Caco-2 (cell line): ENCODE measurements at regions of chr6 and their contacts with region 1.

Region 1: GRCh38 chr6:30742316-30743098 is at the start of gene FLOT1:
- DNase-seq: peak; percentile 96 to 97
- H3K4me3 ChIP-seq: peak within 1 kb of the TSS; percentile 48
- H3K4me3 Mint-ChIP-seq: peak within 1 kb of the TSS; percentile 90
- H3K27ac Mint-ChIP-seq: peak within 1 kb of the TSS; percentile 82
- H3K4me1 ChIP-seq: peaks cover 19% of the 10 kb centered on the region
- H3K4me1 Mint-ChIP-seq: peaks cover 25% of the 10 kb centered on the region
- H3K27me3 ChIP-seq: no peaks in the 10 kb centered on the region
- H3K27me3 Mint-ChIP-seq: no peaks in the 10 kb centered on the region
- CTCF ChIP-seq: no peak
- total RNA-seq, gene FLOT1: 101 and 113 TPM in 2 replicates

Region 2: DNA sequence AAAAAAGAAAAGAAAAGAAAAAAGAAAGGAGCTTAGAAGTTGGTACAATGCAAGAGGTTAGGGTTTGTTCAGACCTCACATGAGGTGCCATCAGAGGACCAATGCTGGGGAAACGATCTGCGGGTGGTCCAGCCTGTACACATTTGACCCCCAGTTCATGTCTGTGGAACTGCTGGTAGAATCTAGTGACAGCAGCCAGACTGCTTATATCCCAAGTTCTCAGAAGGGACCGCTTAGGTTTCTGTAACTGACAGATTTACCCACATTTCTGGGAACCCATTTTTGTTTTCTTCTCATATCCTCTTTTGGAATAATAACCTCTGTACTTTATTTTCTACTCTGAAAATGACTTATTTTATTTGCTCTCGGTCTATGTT is 60.8 kb before region 1 on chr6:
- CTCF ChIA-PET with region 1: no interaction called
- POLR2A ChIA-PET with region 1: no interaction called
- intact Hi-C with region 1: no loop called
- DNase-seq: no peak
- H3K4me3 ChIP-seq: no peak overlapping the region
- H3K4me3 Mint-ChIP-seq: no peak overlapping the region
- H3K27ac Mint-ChIP-seq: no peak overlapping the region
- H3K4me1 ChIP-seq: 0 out of 2 replicates have a peak, but pooled peaks cover 4% of the 10 kb centered on the region
- H3K4me1 Mint-ChIP-seq: peaks cover 13% of the 10 kb centered on the region
- H3K27me3 ChIP-seq: no peaks in the 10 kb centered on the region
- H3K27me3 Mint-ChIP-seq: no peaks in the 10 kb centered on the region
- CTCF ChIP-seq: no peak

Region 3: DNA sequence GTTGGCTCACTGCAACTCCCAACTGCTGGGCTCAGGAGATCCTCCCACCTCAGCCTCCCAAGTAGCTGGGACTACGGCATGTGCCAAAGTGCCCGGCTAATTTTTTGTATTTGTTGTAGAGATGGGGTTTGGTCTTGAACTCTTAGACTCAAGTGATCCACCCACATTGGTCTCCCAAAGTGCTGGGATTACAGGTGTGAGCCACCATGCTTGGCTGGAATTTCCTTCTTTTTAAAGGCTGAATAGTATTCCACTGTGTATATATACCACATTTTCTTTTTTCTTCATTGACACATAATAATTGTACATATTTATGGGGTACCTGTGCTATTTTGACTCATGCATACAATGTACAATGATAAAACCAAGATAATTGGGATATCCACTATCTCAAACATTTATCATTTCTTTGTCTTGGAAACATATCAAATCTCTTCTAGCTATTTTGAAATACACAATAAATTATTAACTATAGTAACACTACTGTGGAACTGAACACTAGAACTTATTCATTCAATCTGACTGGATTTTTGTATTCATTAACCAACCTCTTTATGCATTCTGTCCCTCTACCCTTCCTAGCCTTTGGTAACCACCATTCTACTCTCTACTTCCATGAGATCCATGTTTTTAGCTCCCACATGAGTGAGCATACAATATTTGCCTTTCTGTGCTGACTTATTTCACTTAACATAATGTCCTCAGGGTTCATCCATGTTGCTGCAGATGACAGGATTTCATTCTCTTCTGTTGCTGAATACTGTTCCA is 33.2 kb before region 1 on chr6:
- CTCF ChIA-PET with region 1: no interaction called
- POLR2A ChIA-PET with region 1: no interaction called
- intact Hi-C with region 1: no loop called
- DNase-seq: no peak
- H3K4me3 ChIP-seq: no peak overlapping the region
- H3K4me3 Mint-ChIP-seq: no peak overlapping the region
- H3K27ac Mint-ChIP-seq: no peak overlapping the region
- H3K4me1 ChIP-seq: no peaks in the 10 kb centered on the region
- H3K4me1 Mint-ChIP-seq: peaks cover 7% of the 10 kb centered on the region
- H3K27me3 ChIP-seq: no peaks in the 10 kb centered on the region
- H3K27me3 Mint-ChIP-seq: no peaks in the 10 kb centered on the region
- CTCF ChIP-seq: no peak

Region 4: DNA sequence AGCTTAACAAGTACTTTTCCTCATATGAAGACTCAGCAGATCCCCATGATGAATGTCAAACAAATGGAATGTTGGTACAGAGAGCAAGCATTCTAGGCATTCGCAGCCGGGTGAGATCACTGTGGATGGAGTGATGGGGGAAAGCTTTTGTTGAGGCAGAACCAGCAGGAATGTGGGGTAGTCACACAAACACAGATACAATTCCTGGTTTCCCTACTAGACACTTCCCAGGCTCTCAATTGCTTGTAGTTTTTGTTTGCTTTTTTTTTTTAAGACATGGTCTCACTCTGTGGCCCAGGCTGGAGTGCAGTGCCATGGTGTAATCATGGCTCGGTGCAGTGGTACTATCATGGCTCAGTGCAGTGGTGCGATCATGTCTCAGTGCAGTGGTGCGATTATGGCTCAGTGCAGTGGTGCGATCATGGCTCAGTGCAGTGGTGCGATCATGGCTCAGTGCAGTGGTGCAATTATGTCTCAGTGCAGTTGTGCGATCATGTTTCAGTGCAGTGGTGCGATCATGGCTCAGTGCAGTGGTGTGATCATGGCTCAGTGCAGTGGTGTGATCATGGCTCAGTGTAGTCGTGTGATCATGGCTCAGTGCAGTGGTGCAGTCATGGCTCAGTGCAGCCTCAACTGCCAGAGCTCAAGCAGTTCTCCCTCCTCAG is 17.2 kb after region 1 on chr6:
- CTCF ChIA-PET with region 1: interaction called, 5 read pairs
- POLR2A ChIA-PET with region 1: interaction called, 3 read pairs
- intact Hi-C with region 1: loop called (anchors 1 kb)
- DNase-seq: peak; percentile 65 to 66
- H3K4me3 ChIP-seq: no peak overlapping the region
- H3K4me3 Mint-ChIP-seq: no peak overlapping the region
- H3K27ac Mint-ChIP-seq: peak overlapping the region; percentile 75
- H3K4me1 ChIP-seq: peaks cover 39% of the 10 kb centered on the region
- H3K4me1 Mint-ChIP-seq: peaks cover 34% of the 10 kb centered on the region
- H3K27me3 ChIP-seq: no peaks in the 10 kb centered on the region
- H3K27me3 Mint-ChIP-seq: no peaks in the 10 kb centered on the region
- CTCF ChIP-seq: no peak

Region 5: DNA sequence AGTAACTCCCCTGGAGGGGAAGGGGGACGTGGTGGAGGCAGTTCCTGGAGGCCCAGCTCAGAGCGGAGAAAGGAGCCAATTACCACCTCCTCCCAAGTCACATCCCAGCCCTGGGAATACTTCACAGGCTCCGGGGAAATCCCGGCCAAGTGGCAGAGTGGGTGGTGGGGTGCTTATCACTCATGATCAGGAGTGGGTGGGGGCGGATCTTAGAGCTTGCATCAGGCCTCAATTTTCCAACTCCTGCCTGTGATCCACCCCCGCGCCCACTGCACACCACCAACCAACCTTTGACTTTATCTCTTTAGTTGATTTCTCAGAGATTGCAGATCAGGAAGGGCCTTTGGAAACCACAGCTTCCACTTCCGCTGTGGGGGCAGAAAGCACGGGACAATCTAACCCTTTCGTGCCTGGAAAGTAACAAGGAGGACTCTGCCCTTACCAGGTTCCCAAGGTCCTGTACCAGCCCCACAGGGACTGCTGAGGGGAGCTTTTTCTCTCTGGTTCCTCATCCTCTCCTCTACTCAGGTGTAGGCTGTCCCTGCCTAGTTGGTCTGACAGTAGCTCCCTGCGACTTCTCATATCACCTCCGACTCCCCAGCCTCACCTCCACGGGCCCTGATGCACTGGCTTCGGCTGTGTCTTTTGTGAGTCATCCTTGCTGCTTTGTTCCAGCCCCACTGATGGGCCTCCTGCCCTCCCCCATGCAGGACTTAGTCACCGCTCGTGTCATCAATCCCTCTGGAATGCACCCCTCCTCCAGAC is 26.8 kb after region 1 on chr6:
- CTCF ChIA-PET with region 1: interaction called, 5 read pairs
- POLR2A ChIA-PET with region 1: interaction called, 5 read pairs
- intact Hi-C with region 1: loop called (anchors 1 kb)
- DNase-seq: peak; percentile 87 to 92
- H3K4me3 ChIP-seq: peak overlapping the region; percentile 25
- H3K4me3 Mint-ChIP-seq: peak overlapping the region; percentile 95
- H3K27ac Mint-ChIP-seq: peak overlapping the region; percentile 100
- H3K4me1 ChIP-seq: peaks cover 47% of the 10 kb centered on the region
- H3K4me1 Mint-ChIP-seq: peaks cover 35% of the 10 kb centered on the region
- H3K27me3 ChIP-seq: no peaks in the 10 kb centered on the region
- H3K27me3 Mint-ChIP-seq: no peaks in the 10 kb centered on the region
- CTCF ChIP-seq: no peak

Region 6: DNA sequence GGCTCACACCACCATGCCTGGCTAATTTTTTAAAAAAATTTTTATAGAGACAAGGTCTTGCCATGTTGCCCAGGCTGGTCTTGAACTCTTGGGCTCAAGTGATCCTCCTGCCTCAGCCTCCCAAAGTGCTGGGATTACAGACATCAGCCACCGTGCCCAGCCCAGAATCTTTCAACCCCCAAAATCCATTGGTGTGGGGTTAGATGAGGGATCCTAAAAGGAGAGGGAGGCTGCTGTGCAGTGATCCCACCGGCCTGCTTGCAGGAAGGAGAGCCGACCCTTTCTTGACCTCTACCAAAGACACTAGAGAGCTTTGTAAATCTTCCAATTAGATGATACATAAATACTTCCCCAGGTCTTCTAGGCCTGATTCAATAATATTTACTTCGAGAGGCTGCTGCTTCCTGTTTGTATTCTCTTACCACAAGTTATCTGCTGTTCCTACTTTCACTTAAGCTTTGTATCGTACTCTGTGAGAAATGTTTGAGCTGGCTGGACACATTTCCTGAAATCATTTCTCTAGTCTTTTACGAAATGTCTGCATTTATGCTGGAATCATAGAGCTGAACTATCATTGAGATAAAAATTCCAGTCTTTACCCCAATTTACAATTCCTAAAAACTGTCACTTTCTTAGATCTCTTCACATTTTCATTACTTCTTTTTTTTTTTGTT is 51.2 kb after region 1 on chr6:
- CTCF ChIA-PET with region 1: interaction called, 3 read pairs
- POLR2A ChIA-PET with region 1: interaction called, 3 read pairs
- intact Hi-C with region 1: loop called (anchors 5 kb)
- DNase-seq: no peak
- H3K4me3 ChIP-seq: no peak overlapping the region
- H3K4me3 Mint-ChIP-seq: no peak overlapping the region
- H3K27ac Mint-ChIP-seq: no peak overlapping the region
- H3K4me1 ChIP-seq: no peaks in the 10 kb centered on the region; the same call in 1 of the 2 replicates
- H3K4me1 Mint-ChIP-seq: peaks cover 6% of the 10 kb centered on the region
- H3K27me3 ChIP-seq: no peaks in the 10 kb centered on the region
- H3K27me3 Mint-ChIP-seq: no peaks in the 10 kb centered on the region
- CTCF ChIP-seq: no peak

Region 7: DNA sequence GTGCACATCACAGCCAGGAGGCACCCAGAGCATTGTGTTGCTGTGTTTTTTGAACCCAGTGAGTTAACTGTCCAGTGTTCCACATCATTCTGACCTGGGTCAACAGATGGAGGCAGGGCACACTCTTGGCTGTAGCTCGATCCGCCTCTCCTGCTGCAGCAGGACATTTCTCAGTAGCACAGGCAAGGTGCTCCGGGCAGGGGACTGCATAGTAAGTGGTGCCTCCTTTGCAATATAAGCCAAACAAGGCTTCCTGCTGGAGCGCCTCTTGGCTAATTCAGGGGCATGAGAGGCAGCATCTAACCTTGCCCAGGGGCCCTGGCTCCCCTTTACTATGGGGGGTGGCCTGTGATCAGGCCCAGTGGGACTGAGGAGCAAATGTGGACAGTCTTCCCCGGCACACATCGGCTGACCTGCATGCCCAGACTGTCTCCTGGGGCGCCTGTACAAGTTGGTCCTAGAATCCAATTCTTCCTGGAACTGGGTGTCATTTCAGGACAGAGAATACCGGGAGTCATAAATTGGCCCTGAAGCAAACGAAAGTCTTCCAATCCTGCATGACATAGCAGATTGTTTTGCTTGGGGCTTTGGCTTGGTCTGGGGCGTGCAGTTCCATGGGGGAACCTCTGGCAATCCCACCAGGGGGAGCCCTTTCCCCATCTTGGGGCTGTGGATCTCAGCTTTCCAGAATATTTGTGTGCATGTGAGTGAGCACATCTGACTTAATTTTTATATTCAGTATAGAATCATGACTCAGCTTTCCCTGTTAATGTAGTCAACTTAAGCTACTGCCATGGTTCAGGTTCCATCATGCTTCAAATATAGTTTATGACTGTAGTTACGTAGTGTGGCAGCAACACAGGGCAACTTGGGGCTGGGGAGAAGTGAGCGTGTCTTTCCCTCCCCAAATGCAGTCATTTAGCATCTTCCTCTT is 85.8 kb after region 1 on chr6:
- CTCF ChIA-PET with region 1: interaction called, 3 read pairs
- POLR2A ChIA-PET with region 1: no interaction called
- intact Hi-C with region 1: loop called (anchors 2 kb)
- DNase-seq: peak; percentile 83 to 91
- H3K4me3 ChIP-seq: no peak overlapping the region
- H3K4me3 Mint-ChIP-seq: no peak overlapping the region
- H3K27ac Mint-ChIP-seq: peak overlapping the region; percentile 43
- H3K4me1 ChIP-seq: peaks cover 16% of the 10 kb centered on the region
- H3K4me1 Mint-ChIP-seq: peaks cover 27% of the 10 kb centered on the region
- H3K27me3 ChIP-seq: no peaks in the 10 kb centered on the region
- H3K27me3 Mint-ChIP-seq: no peaks in the 10 kb centered on the region
- CTCF ChIP-seq: peak; percentile 85 to 89

Region 8: GRCh38 chr6:30844091-30844535 is 101.6 kb after region 1 on chr6:
- CTCF ChIA-PET with region 1: interaction called, 5 read pairs
- POLR2A ChIA-PET with region 1: interaction called, 14 read pairs
- intact Hi-C with region 1: no loop called
- DNase-seq: peak; percentile 69 to 81
- H3K4me3 ChIP-seq: no peak overlapping the region
- H3K4me3 Mint-ChIP-seq: peak overlapping the region; percentile 13
- H3K27ac Mint-ChIP-seq: peak overlapping the region; percentile 79
- H3K4me1 ChIP-seq: peaks cover 49% of the 10 kb centered on the region
- H3K4me1 Mint-ChIP-seq: peaks cover 36% of the 10 kb centered on the region
- H3K27me3 ChIP-seq: no peaks in the 10 kb centered on the region
- H3K27me3 Mint-ChIP-seq: no peaks in the 10 kb centered on the region
- CTCF ChIP-seq: peak in 1 of 2 experiments; percentile 28

Region 9: GRCh38 chr6:30877419-30878371 is 135.2 kb after region 1 on chr6:
- CTCF ChIA-PET with region 1: interaction called, 5 read pairs
- POLR2A ChIA-PET with region 1: no interaction called
- intact Hi-C with region 1: loop called (anchors 1 kb)
- DNase-seq: peak; percentile 86
- H3K4me3 ChIP-seq: peak overlapping the region; percentile 10; the same call in 1 of the 2 replicates
- H3K4me3 Mint-ChIP-seq: peak overlapping the region; percentile 30
- H3K27ac Mint-ChIP-seq: no peak overlapping the region
- H3K4me1 ChIP-seq: peaks cover 12% of the 10 kb centered on the region
- H3K4me1 Mint-ChIP-seq: peaks cover 13% of the 10 kb centered on the region
- H3K27me3 ChIP-seq: no peaks in the 10 kb centered on the region
- H3K27me3 Mint-ChIP-seq: no peaks in the 10 kb centered on the region
- CTCF ChIP-seq: peak; percentile 89 to 90

Region 10: DNA sequence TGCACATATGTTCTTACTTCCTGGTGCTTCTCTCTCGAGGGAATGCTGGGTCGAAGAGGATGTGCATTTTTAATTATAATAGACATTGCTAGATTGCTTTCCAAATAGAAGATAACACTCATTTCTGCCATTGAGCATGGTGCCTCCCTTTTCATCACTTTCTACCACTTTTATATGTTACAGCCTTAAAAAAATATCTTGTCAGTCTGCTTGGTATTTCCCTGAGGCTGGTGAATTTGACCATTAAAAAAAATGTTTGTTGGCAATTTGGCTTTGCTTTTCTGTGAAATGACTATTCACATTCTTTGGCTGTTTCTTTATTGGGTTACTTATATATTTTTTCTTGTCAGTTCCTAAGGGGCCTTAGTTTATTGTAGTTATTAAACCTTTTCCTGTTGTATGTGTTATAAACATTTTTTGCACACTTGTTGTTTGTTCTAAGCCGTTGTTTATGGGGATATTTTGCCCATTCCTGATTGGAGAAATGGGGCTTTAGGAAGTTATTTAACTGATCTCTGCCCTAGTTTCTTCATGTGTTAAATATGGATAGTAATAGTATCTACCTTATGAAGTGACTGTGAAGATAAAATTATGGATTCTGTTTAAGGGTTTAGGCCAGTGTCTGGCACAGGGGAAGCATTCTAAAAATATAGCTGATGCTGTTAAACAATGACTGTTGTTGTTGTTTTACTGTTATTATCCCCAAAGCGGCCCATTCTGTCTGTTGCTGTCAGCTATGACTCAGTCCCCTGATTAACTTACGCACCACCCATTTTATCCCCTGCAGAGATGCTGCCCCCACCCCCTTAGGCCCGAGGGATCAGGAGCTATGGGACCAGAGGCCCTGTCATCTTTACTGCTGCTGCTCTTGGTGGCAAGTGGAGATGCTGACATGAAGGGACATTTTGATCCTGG is 145.7 kb after region 1 on chr6:
- CTCF ChIA-PET with region 1: no interaction called
- POLR2A ChIA-PET with region 1: no interaction called
- intact Hi-C with region 1: no loop called
- DNase-seq: no peak
- H3K4me3 ChIP-seq: no peak overlapping the region
- H3K4me3 Mint-ChIP-seq: no peak overlapping the region
- H3K27ac Mint-ChIP-seq: no peak overlapping the region
- H3K4me1 ChIP-seq: peaks cover 25% of the 10 kb centered on the region
- H3K4me1 Mint-ChIP-seq: peaks cover 25% of the 10 kb centered on the region
- H3K27me3 ChIP-seq: no peaks in the 10 kb centered on the region
- H3K27me3 Mint-ChIP-seq: no peaks in the 10 kb centered on the region
- CTCF ChIP-seq: no peak